ENCODE measurements at regions of chr11 and their contacts with region 1.

Region 1: DNA sequence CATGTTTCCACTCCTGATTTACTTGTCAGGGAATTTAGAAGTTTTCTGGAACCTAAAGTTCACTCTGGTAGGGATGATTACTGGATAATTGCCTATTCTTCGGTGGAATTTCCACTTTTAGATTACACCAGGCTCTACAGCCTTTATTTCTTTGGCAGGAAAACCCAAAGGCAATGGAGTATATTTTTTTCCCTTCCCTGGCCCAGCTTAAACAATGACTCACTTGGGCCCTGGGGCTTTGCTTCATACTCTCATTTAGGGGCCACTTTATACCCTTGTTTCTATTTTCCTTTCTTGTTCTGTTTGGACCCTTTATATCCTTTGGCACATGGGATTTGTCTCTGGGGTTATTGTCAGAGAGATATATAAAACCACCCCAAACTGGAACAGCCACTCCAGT is 114.7 kb downstream of the CSTPP1 start:
- DNase-seq: no peak
- ATAC-seq: no peak
- H3K4me3 ChIP-seq: no peak overlapping the region
- H3K27ac ChIP-seq: no peak overlapping the region
- H3K4me1 ChIP-seq: peaks cover 5% of the 10 kb centered on the region
- H3K27me3 ChIP-seq: no peaks in the 10 kb centered on the region
- CTCF ChIP-seq: no peak
- EP300 ChIP-seq: no peak
- POLR2A ChIP-seq: no peak
- RAD21 ChIP-seq: no peak

Region 2: DNA sequence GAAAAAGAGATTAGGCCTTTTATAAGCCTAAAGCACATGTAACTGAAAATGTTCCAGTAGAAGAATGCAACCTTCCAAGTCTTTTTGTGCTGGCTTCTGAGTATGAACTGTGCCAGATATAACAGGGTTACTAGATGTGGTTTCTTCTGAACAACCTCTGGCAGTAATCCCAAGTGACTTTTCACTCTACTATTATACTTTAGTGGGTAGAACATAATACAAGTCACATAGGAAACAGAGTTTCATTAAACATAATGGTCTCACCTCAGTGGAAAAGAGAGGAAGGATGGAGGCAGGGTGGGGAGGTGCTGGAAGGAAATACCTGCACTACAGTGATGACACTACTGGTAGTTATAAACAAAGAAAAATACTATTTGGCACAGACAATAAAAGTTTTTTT is 1011.2 kb before region 1 on chr11:
- CTCF ChIA-PET with region 1: no interaction called
- POLR2A ChIA-PET with region 1: interaction called, 12 read pairs
- RAD21 ChIA-PET with region 1: no interaction called
- SMC1A ChIA-PET with region 1: no interaction called
- in situ Hi-C with region 1: no loop called
- intact Hi-C with region 1: no loop called
- DNase-seq: no peak
- ATAC-seq: no peak
- H3K4me3 ChIP-seq: no peak overlapping the region
- H3K27ac ChIP-seq: no peak overlapping the region
- H3K4me1 ChIP-seq: no peaks in the 10 kb centered on the region
- H3K27me3 ChIP-seq: no peaks in the 10 kb centered on the region
- CTCF ChIP-seq: no peak
- EP300 ChIP-seq: no peak
- POLR2A ChIP-seq: no peak
- RAD21 ChIP-seq: no peak

Measured in GM12878 (cell line).